ENCODE measurements at regions of chr11 and their contacts with region 1.

Region 1: GRCh38 chr11:4065601-4066377 is 28.8 kb upstream of the RRM1 start:
- DNase-seq: no peak
- H3K4me3 ChIP-seq: no peak overlapping the region
- H3K4me3 Mint-ChIP-seq: no peak overlapping the region
- H3K27ac ChIP-seq: no peak overlapping the region
- H3K27ac Mint-ChIP-seq: peak overlapping the region in 4 of 7 donors; percentile 7 to 82 (median 60)
- H3K4me1 ChIP-seq: peaks cover 24 to 25% of the 10 kb centered on the region in 2 donors
- H3K4me1 Mint-ChIP-seq: peaks cover 38% of the 10 kb centered on the region
- H3K27me3 ChIP-seq: no peaks in the 10 kb centered on the region
- H3K27me3 Mint-ChIP-seq: no peaks in the 10 kb centered on the region
- CTCF ChIP-seq: no peak

Region 2: DNA sequence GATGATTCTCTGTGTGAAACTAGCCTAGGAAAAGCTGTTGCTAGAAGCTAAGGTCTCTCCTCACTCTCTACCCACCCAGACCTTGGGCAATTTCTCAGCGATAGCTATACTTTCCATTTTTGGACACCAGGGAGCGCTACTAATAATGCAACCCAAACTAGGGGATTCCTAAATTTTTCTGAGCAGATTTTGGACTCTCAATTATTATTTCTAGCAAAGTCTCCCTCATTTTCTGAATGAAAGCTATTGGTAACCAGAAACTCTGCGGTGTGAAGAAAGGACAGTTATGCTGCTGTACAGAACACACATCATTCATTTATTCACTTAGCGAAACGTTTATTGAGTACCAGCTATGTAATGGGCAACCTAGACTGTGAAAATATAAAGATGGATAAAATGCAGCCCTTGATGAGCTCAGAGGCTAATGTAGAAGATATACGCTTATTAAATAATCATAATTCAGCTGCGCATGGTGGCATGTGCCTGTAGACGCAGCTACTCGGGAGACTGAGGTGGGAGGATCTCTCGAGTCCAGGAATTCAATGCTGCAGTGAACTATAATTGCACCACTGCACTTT is 216.4 kb before region 1 on chr11:
- intact Hi-C with region 1: loop called (anchors 2 to 5 kb)
- DNase-seq: peak; percentile 48 to 58 (median 57)
- H3K4me3 ChIP-seq: no peak overlapping the region
- H3K4me3 Mint-ChIP-seq: no peak overlapping the region
- H3K27ac ChIP-seq: no peak overlapping the region
- H3K27ac Mint-ChIP-seq: no peak overlapping the region
- H3K4me1 ChIP-seq: peaks cover 10 to 13% of the 10 kb centered on the region in 2 donors
- H3K4me1 Mint-ChIP-seq: peaks cover 14% of the 10 kb centered on the region
- H3K27me3 ChIP-seq: no peaks in the 10 kb centered on the region
- H3K27me3 Mint-ChIP-seq: peaks cover 0 to 4% (median 0%) of the 10 kb centered on the region in 3 donors
- CTCF ChIP-seq: peak; percentile 83

Region 3: DNA sequence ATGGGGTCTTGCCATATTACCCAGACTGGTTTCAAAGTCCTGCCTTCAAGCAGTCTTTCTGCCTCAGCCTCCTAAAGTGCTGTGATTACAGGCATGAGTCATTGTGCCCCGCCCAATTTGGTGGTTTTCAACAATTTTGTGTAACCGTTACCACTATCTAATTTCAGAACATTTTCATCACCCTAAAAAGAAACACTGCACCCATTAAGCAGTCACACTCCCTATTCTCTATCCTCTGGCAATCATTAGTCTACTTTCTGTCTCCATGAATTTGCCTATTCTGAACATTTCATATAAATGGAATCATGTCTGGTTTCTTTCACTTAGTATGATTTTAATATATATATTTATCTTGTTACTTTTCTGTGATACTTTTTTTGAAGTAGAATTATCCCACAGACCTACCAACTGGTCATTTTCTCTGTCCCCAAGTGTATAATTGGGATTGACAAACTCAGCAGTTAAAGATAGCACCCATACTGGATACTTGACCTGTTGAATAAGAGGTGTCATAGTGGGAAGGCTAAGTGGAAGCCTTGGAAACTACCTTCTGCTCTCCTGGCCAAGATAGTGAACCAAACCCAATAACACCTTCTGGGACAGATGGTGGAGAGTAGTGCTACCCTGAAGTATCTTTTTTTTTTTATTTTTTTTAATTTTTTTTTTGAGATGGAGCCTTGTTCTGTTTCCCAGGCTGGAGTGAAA is 145.5 kb before region 1 on chr11:
- intact Hi-C with region 1: loop called in 1 of 2 experiments (anchors 10 kb)
- DNase-seq: peak; percentile 84 to 92 (median 91)
- H3K4me3 ChIP-seq: peak overlapping the region in 1 of 3 experiments; percentile 54
- H3K4me3 Mint-ChIP-seq: no peak overlapping the region
- H3K27ac ChIP-seq: peak overlapping the region; percentile 78 to 97
- H3K27ac Mint-ChIP-seq: peak overlapping the region; percentile 92 to 99 (median 97)
- H3K4me1 ChIP-seq: peaks cover 59 to 72% of the 10 kb centered on the region in 2 donors
- H3K4me1 Mint-ChIP-seq: peaks cover 62% of the 10 kb centered on the region
- H3K27me3 ChIP-seq: no peaks in the 10 kb centered on the region
- H3K27me3 Mint-ChIP-seq: no peaks in the 10 kb centered on the region
- CTCF ChIP-seq: no peak

Region 4: DNA sequence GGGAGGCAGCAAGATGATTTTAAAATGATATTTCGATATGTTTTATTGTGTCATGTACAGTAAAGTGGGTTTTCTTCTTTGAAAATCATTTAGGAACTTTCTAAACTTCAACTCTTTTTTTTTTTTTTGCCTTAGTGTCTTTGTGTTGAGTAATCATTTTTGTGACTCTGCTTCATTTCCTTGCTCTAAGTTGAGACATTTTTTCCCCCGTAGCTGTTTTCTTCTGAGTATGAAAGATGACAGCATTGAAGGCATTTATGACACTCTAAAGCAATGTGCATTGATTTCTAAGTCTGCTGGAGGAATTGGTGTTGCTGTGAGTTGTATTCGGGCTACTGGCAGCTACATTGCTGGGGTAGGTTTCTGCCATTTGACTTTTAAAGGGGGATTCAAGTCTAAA is 52.3 kb after region 1 on chr11:
- intact Hi-C with region 1: no loop called
- DNase-seq: no peak
- H3K4me3 ChIP-seq: no peak overlapping the region
- H3K4me3 Mint-ChIP-seq: no peak overlapping the region
- H3K27ac ChIP-seq: no peak overlapping the region
- H3K27ac Mint-ChIP-seq: peak overlapping the region in 1 of 7 donors; percentile 33
- H3K4me1 ChIP-seq: no peaks in the 10 kb centered on the region
- H3K4me1 Mint-ChIP-seq: no peaks in the 10 kb centered on the region
- H3K27me3 ChIP-seq: no peaks in the 10 kb centered on the region
- H3K27me3 Mint-ChIP-seq: no peaks in the 10 kb centered on the region
- CTCF ChIP-seq: no peak

Measured in CD14-positive monocyte (primary cell).